ENCODE measurements at regions of chr17 and their contacts with region 1.

Region 1: GRCh38 chr17:58303971-58304725 is 23.4 kb upstream of the MPO start:
- DNase-seq: peak; percentile 74
- ATAC-seq: peak; percentile 73
- H3K4me3 Mint-ChIP-seq: no peak overlapping the region
- H3K27ac Mint-ChIP-seq: no peak overlapping the region
- H3K4me1 Mint-ChIP-seq: peaks cover 3% of the 10 kb centered on the region
- H3K27me3 Mint-ChIP-seq: peaks cover 8% of the 10 kb centered on the region

Region 2: DNA sequence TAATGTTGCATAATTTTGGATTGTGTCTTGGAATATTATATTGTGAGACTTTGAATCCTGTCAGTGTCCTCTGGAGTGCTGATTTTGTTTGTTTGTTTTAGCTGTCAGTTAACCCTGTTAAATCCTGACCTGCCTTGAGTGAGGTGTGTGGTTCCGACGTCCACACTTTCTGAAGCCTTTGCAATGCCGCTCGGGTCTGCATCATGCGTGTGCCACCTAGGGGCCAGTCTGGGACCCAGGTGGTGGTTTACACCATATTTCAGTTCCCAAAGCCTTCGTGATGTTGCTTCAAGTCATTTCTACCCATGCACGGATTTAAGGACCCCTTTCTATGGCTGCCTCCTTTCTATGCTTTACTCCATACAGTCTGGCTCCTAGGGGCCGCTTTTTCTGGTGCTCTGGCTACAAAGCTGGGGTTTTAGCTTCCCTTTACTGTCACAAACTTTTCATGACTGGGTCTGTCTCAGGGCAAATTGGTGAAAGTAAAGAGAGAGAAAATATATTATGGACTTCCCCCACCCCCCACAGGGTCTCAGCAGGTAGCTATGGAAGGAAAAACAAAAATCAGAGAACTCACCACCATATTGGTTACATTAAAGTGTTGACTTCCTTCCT is 167.4 kb before region 1 on chr17:
- CTCF ChIA-PET with region 1: no interaction called
- POLR2A ChIA-PET with region 1: no interaction called
- DNase-seq: no peak
- ATAC-seq: no peak
- H3K4me3 Mint-ChIP-seq: no peak overlapping the region
- H3K27ac Mint-ChIP-seq: no peak overlapping the region
- H3K4me1 Mint-ChIP-seq: peaks cover 3% of the 10 kb centered on the region
- H3K27me3 Mint-ChIP-seq: peaks cover 23% of the 10 kb centered on the region

Region 3: DNA sequence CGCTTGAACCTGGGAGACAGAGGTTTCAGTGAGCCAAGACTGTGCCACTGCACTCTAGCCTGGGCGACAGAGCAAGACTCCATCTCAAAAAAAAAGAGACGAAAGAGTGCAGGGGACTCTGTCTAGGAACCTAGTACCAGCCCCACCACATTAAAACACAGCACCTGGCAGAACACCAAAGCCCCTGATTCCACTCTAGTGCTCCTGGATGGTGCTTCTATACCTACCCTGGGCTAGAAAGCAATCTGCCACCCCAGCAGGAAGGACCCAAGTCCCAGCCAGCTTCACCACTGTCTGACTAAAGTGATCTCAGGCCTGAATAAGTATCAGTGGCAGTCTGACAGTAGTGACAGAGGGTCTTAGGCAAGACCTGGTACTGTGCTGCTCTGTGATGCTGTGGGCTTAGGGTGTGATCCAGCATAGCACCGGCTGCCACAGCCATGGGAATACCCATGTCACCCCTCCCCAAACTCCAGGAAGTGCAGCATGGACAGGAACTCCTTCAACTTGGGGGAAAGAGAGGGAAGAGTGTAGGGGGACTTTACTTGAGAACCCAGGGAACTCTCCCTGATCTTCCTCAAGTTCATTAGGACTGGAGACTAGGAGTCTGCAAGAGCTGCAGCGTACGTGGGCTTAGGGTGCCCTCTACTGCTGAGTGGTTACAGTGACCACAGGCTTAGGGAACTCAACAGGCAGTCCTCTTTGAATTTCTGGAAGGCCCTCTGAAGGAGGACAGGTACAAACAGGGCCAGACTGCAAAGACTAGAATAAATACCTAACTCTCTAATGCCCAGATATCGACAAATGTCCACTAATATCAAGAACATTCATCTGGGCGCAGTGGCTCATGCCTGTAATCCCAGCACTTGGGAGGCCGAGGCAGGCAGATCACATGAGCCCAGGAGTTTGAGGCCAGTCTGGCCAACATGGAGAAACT is 143.2 kb after region 1 on chr17:
- CTCF ChIA-PET with region 1: interaction called, 12 read pairs
- POLR2A ChIA-PET with region 1: no interaction called
- DNase-seq: peak; percentile 84
- ATAC-seq: peak; percentile 95
- H3K4me3 Mint-ChIP-seq: no peak overlapping the region
- H3K27ac Mint-ChIP-seq: no peak overlapping the region
- H3K4me1 Mint-ChIP-seq: peaks cover 4% of the 10 kb centered on the region
- H3K27me3 Mint-ChIP-seq: no peaks in the 10 kb centered on the region